Dorsolateral prefrontal cortex (tissue), 120 donors: ENCODE measurements at regions of chr3 and their contacts with region 1.

Region 1: DNA sequence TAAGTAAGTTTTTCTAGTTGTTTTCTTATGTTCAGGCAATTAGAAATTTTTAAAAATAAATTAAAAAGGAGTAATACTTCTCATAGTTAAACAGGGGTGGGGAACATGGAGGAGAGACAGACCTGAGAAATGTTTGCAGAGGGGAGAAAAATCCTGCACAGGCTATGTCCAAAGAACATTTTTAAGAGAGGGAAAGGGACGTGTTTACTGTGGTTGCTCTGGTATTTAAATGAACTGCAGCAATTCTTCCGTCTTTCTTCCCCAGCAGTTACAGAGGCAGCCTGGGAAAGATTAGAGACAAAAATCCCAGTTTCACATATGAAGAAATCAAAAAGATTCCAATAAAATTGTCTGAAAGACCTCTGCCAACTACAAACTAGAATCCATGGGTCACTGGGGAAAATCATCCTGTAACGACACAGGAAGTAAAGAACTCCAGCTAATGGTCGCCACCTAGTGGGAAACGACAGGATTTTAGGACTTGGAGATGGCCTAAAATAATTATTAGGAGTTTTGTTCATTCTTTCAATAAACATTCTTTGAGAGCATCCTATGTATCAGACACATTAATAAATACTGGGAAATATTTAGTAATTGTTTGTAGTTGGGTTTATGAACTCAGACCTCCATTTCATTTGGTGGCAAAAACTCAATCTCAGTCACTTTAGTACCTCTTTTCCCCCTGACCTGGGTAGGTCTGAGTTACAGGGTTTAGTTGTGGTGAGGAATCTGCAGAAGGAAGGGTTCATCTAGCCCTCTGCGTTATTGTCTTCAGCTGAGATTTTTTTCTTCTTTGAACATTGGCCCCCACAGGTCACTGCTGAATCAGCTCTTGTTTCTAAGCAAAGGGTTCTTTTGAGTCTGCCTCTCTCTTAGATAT is 69.9 kb upstream of the GOLIM4 start:
- DNase-seq: peak in 4 of 10 donors; percentile 20 to 78 (median 52)
- H3K4me3 ChIP-seq: peak overlapping the region in 15 of 59 donors; percentile 3 to 47 (median 21)
- H3K27ac ChIP-seq: peak overlapping the region in 14 of 59 donors; percentile 1 to 60 (median 28)
- H3K27me3 ChIP-seq: no peaks in the 10 kb centered on the region
- CTCF ChIP-seq: peak; percentile 60 to 95 (median 86)

Region 2: GRCh38 chr3:168034152-168034928 is 131.3 kb before region 1 on chr3:
- intact Hi-C with region 1: no loop called
- DNase-seq: no peak
- H3K4me3 ChIP-seq: no peak overlapping the region
- H3K27ac ChIP-seq: no peak overlapping the region
- H3K27me3 ChIP-seq: no peaks in the 10 kb centered on the region
- CTCF ChIP-seq: no peak

Region 3: DNA sequence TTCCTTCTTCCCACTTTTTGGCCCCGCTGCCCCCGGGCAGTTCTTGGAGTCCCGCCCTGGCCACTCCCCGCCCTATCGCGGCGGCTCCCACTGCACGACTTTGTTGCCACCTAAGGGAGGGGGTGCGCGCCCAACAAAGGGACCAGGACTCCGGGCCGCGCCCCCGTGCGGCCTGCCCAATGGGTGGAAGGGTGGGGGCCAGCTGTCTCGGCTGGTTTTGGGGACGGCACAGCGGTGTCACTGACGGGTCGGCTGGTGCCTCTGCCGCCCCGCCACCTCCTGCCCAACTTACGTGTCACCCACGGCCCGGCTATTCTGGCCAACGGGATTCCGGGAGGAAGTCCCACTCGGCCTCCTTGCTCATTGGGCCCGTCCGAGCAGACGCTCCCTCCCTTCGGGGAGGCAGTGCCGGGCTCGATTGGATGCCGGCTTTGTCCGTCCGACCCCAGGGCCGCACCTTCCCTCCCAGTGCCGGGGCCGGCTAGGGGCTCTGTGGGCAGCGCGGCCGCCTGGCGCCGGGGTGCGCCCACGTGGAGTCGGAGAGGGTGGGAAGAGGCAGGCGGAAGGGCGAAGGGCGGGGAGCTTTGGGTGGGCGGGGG is 69.9 kb before region 1 on chr3 and contains the start of gene GOLIM4:
- intact Hi-C with region 1: loop called in 1 of 2 experiments (anchors 5 kb)
- DNase-seq: peak; percentile 61 to 96 (median 92)
- H3K4me3 ChIP-seq: peak within 1 kb of the TSS; percentile 64 to 96 (median 82)
- H3K27ac ChIP-seq: peak within 1 kb of the TSS; percentile 64 to 98 (median 91)
- H3K27me3 ChIP-seq: peaks cover 0 to 2% (median 0%) of the 10 kb centered on the region in 45 donors
- CTCF ChIP-seq: peak in 32 of 56 donors; percentile 8 to 62 (median 30)
- total RNA-seq, gene GOLIM4: 26.3 to 108 (median 49.7) TPM

Region 4: GRCh38 chr3:168197162-168197561 is 31.5 kb after region 1 on chr3:
- intact Hi-C with region 1: no loop called
- DNase-seq: no peak
- H3K4me3 ChIP-seq: no peak overlapping the region
- H3K27ac ChIP-seq: no peak overlapping the region
- H3K27me3 ChIP-seq: peaks cover 0 to 7% (median 0%) of the 10 kb centered on the region in 45 donors
- CTCF ChIP-seq: no peak

Region 5: DNA sequence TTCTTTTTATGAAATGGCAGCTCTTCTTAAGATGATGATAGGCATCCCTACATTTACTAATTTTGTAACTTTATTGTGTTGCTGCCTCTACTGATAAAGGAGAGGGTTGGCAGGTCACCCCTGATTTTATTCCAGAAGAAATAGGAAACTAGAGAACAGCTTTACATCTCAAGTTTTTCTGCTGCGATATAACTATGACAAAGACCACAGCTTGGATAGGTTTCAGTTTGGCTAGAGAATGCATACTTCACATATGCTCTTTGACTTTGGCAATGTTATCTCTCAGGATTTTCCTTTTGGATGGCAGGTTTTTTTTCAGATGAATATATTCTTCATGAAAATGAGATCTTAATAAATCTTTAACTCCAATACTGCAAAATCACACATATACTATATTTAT is 325.4 kb after region 1 on chr3:
- intact Hi-C with region 1: no loop called
- DNase-seq: no peak
- H3K4me3 ChIP-seq: no peak overlapping the region
- H3K27ac ChIP-seq: no peak overlapping the region
- H3K27me3 ChIP-seq: peaks cover 0 to 4% (median 0%) of the 10 kb centered on the region in 45 donors
- CTCF ChIP-seq: no peak